Cardiac septum (tissue), 1 donor: ENCODE measurements at regions of chr18 and their contacts with region 1.

Region 1: DNA sequence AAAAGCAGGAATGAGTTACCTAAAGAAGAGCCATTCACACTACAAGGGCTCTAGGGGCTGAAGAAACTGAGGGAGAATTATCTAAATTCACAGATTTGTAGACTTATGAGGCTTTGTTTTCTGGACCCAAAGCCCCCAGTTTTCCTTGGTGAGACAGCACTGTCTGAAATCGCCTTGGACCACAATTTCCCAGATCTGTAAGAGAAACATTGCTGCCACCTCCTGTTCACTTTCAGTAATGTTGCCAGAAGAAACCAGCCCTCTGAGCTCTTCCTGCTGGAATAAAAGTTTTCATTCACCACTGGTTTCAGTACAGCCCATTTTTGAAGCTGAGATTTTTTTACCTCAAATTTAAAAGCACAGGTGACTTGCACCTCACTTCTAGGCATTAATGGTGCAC is 169.2 kb downstream of the CDH20 start:
- DNase-seq: no peak

Region 2: GRCh38 chr18:59988098-59988706 is 1514.3 kb before region 1 on chr18:
- intact Hi-C with region 1: loop called (anchors 5 kb)
- DNase-seq: no peak

Region 3: DNA sequence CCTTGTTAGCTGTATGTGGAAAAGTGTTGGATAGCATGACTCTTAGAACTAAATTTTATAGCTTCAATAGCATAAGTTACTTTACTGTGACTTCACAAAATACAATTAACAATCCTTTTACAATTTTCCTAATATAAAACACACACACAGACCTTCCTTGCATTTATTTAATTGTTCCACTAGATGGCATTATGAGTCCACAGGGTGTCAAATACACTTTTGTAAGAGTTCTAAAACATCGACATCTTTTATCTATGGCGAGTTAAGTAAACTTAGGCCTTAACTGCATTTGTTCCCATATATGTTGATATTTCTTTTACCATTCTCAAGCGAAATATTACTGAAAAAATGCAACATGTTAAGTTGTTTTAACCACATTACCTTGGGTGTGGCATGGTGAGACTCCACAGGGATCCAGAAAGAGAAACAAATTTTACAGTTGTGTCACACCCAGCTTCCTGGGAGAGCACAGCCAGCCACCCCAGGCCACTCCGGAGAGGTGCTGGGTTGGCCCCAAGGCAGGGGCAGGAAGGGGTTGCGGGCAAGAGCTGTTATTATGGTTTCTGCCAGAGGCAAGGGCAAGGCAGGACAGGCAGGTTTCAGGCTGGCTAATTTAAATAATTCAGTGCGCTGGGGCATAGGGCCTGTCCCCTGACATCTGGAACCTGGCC is 817.5 kb before region 1 on chr18:
- intact Hi-C with region 1: loop called (anchors 5 kb)
- DNase-seq: no peak

Region 4: GRCh38 chr18:61085761-61086160 is 416.7 kb before region 1 on chr18:
- intact Hi-C with region 1: loop called (anchors 5 kb)
- DNase-seq: no peak

Region 5: DNA sequence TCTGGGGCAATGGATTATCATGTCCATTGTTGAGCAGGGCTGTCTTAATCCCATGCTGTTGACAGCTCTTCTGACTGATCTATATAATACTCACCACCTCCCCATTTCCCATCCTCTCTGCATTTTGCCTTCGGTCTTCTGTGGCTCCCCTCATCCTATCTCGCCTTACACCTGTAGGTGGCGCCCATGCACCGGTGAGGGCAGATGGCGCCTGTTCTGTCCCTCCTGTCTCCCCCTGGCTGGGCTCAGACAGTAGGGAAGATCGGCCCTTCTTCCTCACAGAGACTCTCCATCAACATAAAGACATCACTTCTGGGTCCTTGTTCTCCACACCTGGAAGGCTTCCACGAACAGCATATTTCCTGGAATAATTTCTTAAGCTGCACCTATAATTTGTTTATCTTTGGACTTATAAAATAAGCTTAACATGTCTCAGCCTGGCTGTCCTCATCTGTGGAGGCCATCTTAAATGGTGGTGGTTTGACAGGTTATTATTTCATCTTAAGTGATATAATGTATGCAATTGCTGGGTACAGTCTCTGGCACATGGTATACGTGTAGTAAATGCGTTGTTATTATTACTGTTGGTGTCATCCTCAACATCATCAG is 180.1 kb before region 1 on chr18:
- intact Hi-C with region 1: loop called (anchors 5 kb)
- DNase-seq: no peak